T-cell (primary cell): ENCODE measurements at regions of chr2 and their contacts with region 1.

Region 1: DNA sequence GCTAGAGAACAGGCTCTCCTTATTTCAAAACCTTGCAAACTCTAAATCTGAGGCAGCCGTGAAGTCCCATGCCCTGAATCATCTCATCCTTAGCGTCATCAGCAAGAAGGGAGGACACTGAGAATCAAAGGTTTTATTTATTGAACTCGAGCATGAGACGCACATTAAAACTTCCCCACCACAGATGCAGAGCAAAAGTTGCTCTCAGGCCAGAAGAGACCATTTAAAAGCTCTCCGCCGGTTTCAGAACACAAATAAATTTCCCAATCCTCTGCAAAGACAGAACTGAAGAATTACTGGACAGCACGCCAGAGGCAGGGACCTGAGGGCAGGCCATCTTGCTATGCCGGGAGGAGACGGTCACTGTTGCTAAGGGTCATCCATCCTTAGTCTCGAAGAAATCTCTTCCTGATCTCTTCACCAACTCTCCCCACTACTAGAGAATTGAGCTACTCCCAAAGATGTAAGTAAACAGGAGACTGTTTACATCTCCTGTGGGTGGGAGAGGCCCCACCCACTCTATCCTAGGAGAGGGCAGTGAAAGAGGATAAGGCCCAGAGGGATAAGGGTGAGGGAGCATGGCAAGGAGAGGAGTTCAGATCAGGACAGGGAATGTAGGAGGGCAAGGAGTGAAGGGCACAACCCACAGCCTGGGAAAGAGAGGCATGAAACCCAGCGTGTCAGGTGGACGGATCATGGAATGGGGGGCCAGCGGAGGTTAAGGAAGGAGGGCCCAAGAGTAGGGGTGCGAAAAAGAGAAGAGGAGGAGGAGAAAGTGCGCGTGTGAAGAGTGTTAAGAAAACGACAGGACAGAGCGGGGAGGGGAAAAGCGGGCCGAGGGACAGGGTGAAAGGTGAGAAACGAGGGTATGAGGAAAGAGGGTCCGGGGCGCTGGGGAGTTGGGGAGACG is 1.1 kb downstream of the AMMECR1L start:
- DNase-seq: no peak
- ATAC-seq: no peak
- H3K4me3 ChIP-seq: peak overlapping the region; percentile 23 to 27
- H3K4me3 Mint-ChIP-seq: peak overlapping the region; percentile 83 to 91 (median 88)
- H3K27ac ChIP-seq: no peak overlapping the region
- H3K27ac Mint-ChIP-seq: peak overlapping the region; percentile 43 to 80
- H3K4me1 ChIP-seq: peaks cover 18 to 20% of the 10 kb centered on the region in 2 experiments
- H3K4me1 Mint-ChIP-seq: peaks cover 56 to 70% (median 63%) of the 10 kb centered on the region in 3 donors
- H3K27me3 ChIP-seq: no peaks in the 10 kb centered on the region
- H3K27me3 Mint-ChIP-seq: no peaks in the 10 kb centered on the region

Region 2: DNA sequence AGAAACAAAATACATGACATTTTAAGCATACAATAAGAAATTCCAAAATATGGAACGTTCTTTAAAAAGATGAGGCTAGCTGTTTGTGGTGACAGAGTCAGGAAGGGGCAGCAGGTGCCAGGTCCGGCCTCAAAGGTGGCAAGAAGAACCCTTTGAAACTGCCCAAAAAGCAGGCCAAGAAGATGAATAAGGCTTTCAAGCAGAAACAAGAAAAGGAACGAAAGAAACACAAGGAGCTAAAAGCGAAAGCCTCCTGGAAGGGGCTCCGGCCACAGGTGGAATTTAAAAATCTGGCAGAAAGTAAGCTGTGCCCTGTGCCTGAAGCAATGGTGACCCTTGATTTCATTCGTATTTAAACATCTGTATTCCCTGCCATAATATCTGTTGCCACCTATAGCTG is 79.2 kb before region 1 on chr2:
- CTCF ChIA-PET with region 1: no interaction called
- POLR2A ChIA-PET with region 1: interaction called in 1 of 2 experiments, 10 read pairs
- DNase-seq: no peak
- ATAC-seq: no peak
- H3K4me3 ChIP-seq: no peak overlapping the region
- H3K4me3 Mint-ChIP-seq: peak overlapping the region in 2 of 3 donors; percentile 31 to 100
- H3K27ac ChIP-seq: no peak overlapping the region
- H3K27ac Mint-ChIP-seq: no peak overlapping the region
- H3K4me1 ChIP-seq: peaks cover 23 to 47% of the 10 kb centered on the region in 2 experiments
- H3K4me1 Mint-ChIP-seq: peaks cover 77 to 85% (median 83%) of the 10 kb centered on the region in 3 donors
- H3K27me3 ChIP-seq: no peaks in the 10 kb centered on the region
- H3K27me3 Mint-ChIP-seq: no peaks in the 10 kb centered on the region

Region 3: GRCh38 chr2:128714851-128715312 is 830.2 kb after region 1 on chr2:
- CTCF ChIA-PET with region 1: no interaction called
- POLR2A ChIA-PET with region 1: no interaction called
- DNase-seq: no peak
- ATAC-seq: no peak
- H3K4me3 ChIP-seq: no peak overlapping the region
- H3K4me3 Mint-ChIP-seq: no peak overlapping the region
- H3K27ac ChIP-seq: no peak overlapping the region
- H3K27ac Mint-ChIP-seq: no peak overlapping the region
- H3K4me1 ChIP-seq: no peaks in the 10 kb centered on the region
- H3K4me1 Mint-ChIP-seq: no peaks in the 10 kb centered on the region
- H3K27me3 ChIP-seq: peaks cover 0 to 32% of the 10 kb centered on the region in 2 experiments
- H3K27me3 Mint-ChIP-seq: peaks cover 18 to 32% of the 10 kb centered on the region in 2 donors